ENCODE measurements at regions of chr3 and their contacts with region 1.

Region 1: GRCh38 chr3:100403362-100404249 is 2.3 kb downstream of the LNP1 start:
- DNase-seq: no peak
- H3K4me3 ChIP-seq: peak overlapping the region; percentile 87 to 97
- H3K27ac ChIP-seq: peak overlapping the region; percentile 94 to 99; a peak in 3 of 4 replicates
- H3K4me1 ChIP-seq: peaks cover 0 to 13% of the 10 kb centered on the region in 2 experiments; a peak in 3 of 4 replicates
- H3K27me3 ChIP-seq: no peaks in the 10 kb centered on the region
- CTCF ChIP-seq: peak; percentile 33
- EP300 ChIP-seq: no peak
- RAD21 ChIP-seq: peak; percentile 22; the same call in 1 of the 2 replicates

Region 2: GRCh38 chr3:100416176-100416575 is 12.6 kb after region 1 on chr3:
- CTCF ChIA-PET with region 1: interaction called, 10 read pairs
- POLR2A ChIA-PET with region 1: interaction called, 5 read pairs
- DNase-seq: no peak
- H3K4me3 ChIP-seq: no peak overlapping the region
- H3K27ac ChIP-seq: no peak overlapping the region
- H3K4me1 ChIP-seq: no peaks in the 10 kb centered on the region
- H3K27me3 ChIP-seq: no peaks in the 10 kb centered on the region
- CTCF ChIP-seq: no peak
- EP300 ChIP-seq: no peak
- RAD21 ChIP-seq: no peak

Measured in SK-N-SH (cell line).